HEK293 (cell line): ENCODE measurements at regions of chr3 and their contacts with region 1.

Region 1: DNA sequence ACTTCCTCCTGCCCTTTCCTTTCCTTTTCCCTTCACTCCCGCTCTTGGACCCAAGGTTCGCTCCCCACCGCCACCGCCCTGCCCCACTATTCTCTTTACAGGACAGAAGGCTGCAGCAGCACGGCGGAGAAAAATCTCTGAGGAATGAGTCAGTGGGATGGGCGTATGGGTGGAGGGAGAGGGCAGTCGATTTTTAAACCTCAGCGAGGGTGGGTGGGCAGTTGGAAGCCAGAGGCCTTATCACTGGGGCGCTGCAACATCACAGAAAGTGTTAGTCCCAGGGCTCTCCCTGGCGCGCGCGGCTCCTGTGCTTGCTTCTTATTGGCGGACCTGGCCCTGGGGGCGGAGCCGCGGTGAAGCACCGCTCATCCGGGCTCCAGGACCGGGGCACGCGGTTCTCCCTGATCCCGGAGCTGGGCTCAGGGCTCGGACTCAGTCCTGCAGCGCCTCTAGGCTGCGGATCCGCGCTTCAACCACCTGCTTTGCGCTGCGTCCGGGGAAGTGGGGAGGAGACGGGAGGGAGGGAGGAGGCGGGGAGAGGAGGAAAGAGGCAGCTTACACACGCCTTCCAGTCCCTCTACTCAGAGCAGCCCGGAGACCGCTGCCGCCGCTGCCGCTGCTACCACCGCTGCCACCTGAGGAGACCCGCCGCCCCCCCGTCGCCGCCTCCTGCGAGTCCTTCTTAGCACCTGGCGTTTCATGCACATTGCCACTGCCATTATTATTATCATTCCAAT is at the start of gene ALCAM:
- H3K4me3 ChIP-seq: peak within 1 kb of the TSS; percentile 80
- H3K27ac ChIP-seq: peak within 1 kb of the TSS; percentile 92
- H3K4me1 ChIP-seq: peaks cover 2% of the 10 kb centered on the region; the same call in 1 of the 2 replicates
- CTCF ChIP-seq: peak; percentile 74

Region 2: GRCh38 chr3:105518806-105519418 is 152.4 kb after region 1 on chr3:
- CTCF ChIA-PET with region 1: interaction called, 11 read pairs
- POLR2A ChIA-PET with region 1: no interaction called
- H3K4me3 ChIP-seq: no peak overlapping the region
- H3K27ac ChIP-seq: no peak overlapping the region
- H3K4me1 ChIP-seq: no peaks in the 10 kb centered on the region; the same call in 1 of the 2 replicates
- CTCF ChIP-seq: no peak